ENCODE measurements at regions of chr2 and their contacts with region 1.

Region 1: GRCh38 chr2:45699032-45699658 is 47.7 kb downstream of the PRKCE start:
- DNase-seq: peak; percentile 41
- CTCF ChIP-seq: no peak

Region 2: GRCh38 chr2:45712570-45712969 is 13.4 kb after region 1 on chr2:
- CTCF ChIA-PET with region 1: interaction called, 10 read pairs
- POLR2A ChIA-PET with region 1: no interaction called
- DNase-seq: no peak
- CTCF ChIP-seq: peak; percentile 9

Region 3: DNA sequence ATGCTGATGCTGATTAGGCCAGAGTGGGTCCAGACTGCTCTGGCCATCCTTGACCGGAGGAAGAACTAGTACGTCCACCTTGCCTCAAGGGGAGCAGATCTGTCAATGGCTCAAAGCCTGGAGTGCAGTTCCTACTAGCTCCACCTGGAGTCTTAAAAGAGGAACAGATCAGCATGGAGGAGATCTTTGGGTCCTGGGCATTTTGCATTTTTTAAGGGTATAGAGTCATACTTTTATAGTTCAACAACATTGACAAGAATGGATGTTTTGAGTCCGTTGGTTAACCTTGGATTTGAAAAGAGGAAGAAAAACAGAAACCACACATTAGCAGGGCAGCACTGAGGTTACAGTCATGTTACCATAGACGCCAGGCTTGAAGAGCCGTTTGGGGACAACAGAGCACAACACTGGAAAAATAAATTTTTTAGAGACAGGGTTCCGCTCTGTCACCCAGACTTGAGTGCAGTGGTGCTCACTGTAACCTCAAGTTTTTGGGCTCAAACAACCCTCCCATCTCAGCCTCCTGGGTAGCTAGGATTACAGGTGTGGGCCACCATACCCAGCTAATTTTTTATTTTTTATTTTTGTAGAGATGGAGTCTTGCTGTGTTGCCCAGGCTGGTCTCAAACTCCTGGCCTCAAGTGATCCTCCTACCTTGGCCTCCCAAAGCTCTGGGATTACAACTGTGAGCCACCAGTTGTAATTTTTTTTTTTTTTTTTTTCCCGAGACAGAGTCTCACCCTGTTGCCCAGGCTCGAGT is 30.8 kb after region 1 on chr2:
- CTCF ChIA-PET with region 1: interaction called, 19 read pairs
- POLR2A ChIA-PET with region 1: no interaction called
- DNase-seq: peak; percentile 47
- CTCF ChIP-seq: peak; percentile 52